Activated B cell treated with CpG ODN at 0.5 μM for 24 hours (primary cell): ENCODE measurements at regions of chr3 and their contacts with region 1.

Region 1: GRCh38 chr3:156674046-156674910 is at the start of gene TIPARP:
- DNase-seq: peak; percentile 100
- ATAC-seq: peak; percentile 80
- H3K4me3 Mint-ChIP-seq: peak within 1 kb of the TSS; percentile 92
- H3K27ac Mint-ChIP-seq: peak within 1 kb of the TSS; percentile 97
- H3K4me1 Mint-ChIP-seq: peaks cover 42% of the 10 kb centered on the region
- H3K27me3 Mint-ChIP-seq: no peaks in the 10 kb centered on the region
- CTCF ChIP-seq: no peak
- total RNA-seq, gene TIPARP: 31.3 and 32.3 TPM in 2 replicates

Region 2: GRCh38 chr3:156151824-156152428 is 522.4 kb before region 1 on chr3:
- CTCF ChIA-PET with region 1: no interaction called
- POLR2A ChIA-PET with region 1: no interaction called
- intact Hi-C with region 1: loop called (anchors 1 kb)
- DNase-seq: no peak
- ATAC-seq: peak; percentile 37
- H3K4me3 Mint-ChIP-seq: no peak overlapping the region
- H3K27ac Mint-ChIP-seq: no peak overlapping the region
- H3K4me1 Mint-ChIP-seq: peaks cover 6% of the 10 kb centered on the region
- H3K27me3 Mint-ChIP-seq: no peaks in the 10 kb centered on the region
- CTCF ChIP-seq: no peak

Region 3: DNA sequence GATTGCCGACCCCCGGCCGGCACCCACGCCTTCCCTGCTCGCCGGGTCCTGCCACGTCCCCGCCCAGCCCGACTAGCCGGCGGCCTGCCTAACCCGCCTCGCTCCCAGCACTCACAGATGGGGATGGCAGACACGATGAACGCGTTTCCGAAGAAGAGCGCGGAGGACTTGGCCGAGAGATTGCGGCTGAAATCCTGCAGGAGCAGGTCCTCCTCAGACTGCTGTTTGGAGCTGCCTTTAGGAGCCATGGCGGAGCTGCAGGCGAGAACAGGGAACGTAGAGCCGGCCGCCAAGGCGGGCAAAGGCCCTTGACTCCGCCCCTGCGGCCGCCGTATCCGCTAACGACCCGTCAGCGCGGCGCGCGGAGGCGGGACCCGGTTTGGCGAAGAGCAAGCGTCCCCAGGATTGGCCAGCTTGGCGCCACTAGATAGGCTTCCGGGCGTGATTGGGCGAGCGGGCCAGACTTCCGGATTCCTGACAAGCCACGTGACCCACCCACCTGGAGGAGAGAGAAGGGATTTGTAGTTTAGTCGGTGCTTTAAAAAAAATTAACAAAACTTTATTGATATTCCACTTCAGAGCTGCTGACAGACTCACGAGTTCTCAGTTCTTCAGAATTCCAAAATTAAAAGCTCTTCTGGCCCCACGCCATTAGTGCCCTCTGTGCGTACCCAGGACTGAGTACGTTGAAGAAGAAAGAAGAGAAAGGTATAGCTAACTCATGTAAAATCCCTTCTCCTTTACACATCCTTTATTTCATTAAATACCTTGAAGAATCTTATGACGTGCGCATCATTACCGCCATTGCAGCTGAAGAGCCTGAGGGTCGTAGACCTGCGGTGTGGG is 119.2 kb before region 1 on chr3 and contains the start of gene SSR3:
- CTCF ChIA-PET with region 1: interaction called, 27 read pairs
- POLR2A ChIA-PET with region 1: interaction called, 44 read pairs
- intact Hi-C with region 1: loop called (anchors 1 kb)
- DNase-seq: peak; percentile 94
- ATAC-seq: peak; percentile 99
- H3K4me3 Mint-ChIP-seq: peak within 1 kb of the TSS; percentile 98
- H3K27ac Mint-ChIP-seq: peak within 1 kb of the TSS; percentile 91
- H3K4me1 Mint-ChIP-seq: peaks cover 37% of the 10 kb centered on the region
- H3K27me3 Mint-ChIP-seq: no peaks in the 10 kb centered on the region
- CTCF ChIP-seq: no peak
- total RNA-seq, gene SSR3: 64.3 and 69.2 TPM in 2 replicates

Region 4: GRCh38 chr3:156605686-156606605 is 68.3 kb before region 1 on chr3:
- CTCF ChIA-PET with region 1: no interaction called
- POLR2A ChIA-PET with region 1: no interaction called
- intact Hi-C with region 1: no loop called
- DNase-seq: no peak
- ATAC-seq: no peak
- H3K4me3 Mint-ChIP-seq: peak overlapping the region; percentile 83
- H3K27ac Mint-ChIP-seq: no peak overlapping the region
- H3K4me1 Mint-ChIP-seq: peaks cover 12% of the 10 kb centered on the region
- H3K27me3 Mint-ChIP-seq: peaks cover 8% of the 10 kb centered on the region
- CTCF ChIP-seq: no peak

Region 5: GRCh38 chr3:156816800-156817645 is 142.7 kb after region 1 on chr3:
- CTCF ChIA-PET with region 1: interaction called, 3 read pairs
- POLR2A ChIA-PET with region 1: interaction called, 58 read pairs
- intact Hi-C with region 1: loop called (anchors 1 kb)
- DNase-seq: peak; percentile 93
- ATAC-seq: peak; percentile 83
- H3K4me3 Mint-ChIP-seq: peak overlapping the region; percentile 94
- H3K27ac Mint-ChIP-seq: peak overlapping the region; percentile 99
- H3K4me1 Mint-ChIP-seq: peaks cover 42% of the 10 kb centered on the region
- H3K27me3 Mint-ChIP-seq: no peaks in the 10 kb centered on the region
- CTCF ChIP-seq: no peak

Region 6: GRCh38 chr3:156964577-156964976 is 290.3 kb after region 1 on chr3:
- CTCF ChIA-PET with region 1: no interaction called
- POLR2A ChIA-PET with region 1: no interaction called
- intact Hi-C with region 1: no loop called
- DNase-seq: no peak
- ATAC-seq: no peak
- H3K4me3 Mint-ChIP-seq: no peak overlapping the region
- H3K27ac Mint-ChIP-seq: no peak overlapping the region
- H3K4me1 Mint-ChIP-seq: no peaks in the 10 kb centered on the region
- H3K27me3 Mint-ChIP-seq: no peaks in the 10 kb centered on the region
- CTCF ChIP-seq: no peak

Region 7: DNA sequence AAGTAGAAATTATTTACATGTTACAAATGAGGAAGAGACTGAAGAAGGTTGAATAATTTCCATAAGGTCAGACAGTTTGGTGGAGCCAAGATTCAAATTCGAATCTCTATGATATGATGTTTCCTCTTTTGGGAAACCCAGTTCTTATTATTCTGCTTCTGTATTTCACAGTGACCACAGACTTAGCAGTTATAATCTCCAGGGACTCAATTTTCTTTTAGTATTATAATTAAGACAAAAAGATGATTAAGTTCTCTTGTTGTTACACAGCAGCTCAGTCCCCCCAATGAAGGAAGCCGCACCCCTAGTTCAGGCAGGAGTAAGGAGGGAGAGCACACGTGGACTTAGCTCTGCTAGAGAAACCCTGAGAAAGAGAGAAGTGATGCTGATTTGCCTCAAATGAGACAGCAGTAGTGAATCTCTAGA is 355.1 kb after region 1 on chr3:
- CTCF ChIA-PET with region 1: interaction called, 3 read pairs
- POLR2A ChIA-PET with region 1: interaction called, 3 read pairs
- intact Hi-C with region 1: loop called (anchors 1 kb)
- DNase-seq: peak; percentile 19
- ATAC-seq: peak; percentile 92
- H3K4me3 Mint-ChIP-seq: peak overlapping the region; percentile 15
- H3K27ac Mint-ChIP-seq: peak overlapping the region; percentile 77
- H3K4me1 Mint-ChIP-seq: peaks cover 30% of the 10 kb centered on the region
- H3K27me3 Mint-ChIP-seq: peaks cover 2% of the 10 kb centered on the region
- CTCF ChIP-seq: no peak

Region 8: GRCh38 chr3:157136647-157137387 is 462.5 kb after region 1 on chr3:
- CTCF ChIA-PET with region 1: interaction called, 17 read pairs
- POLR2A ChIA-PET with region 1: interaction called, 11 read pairs
- intact Hi-C with region 1: loop called (anchors 1 kb)
- DNase-seq: no peak
- ATAC-seq: no peak
- H3K4me3 Mint-ChIP-seq: no peak overlapping the region
- H3K27ac Mint-ChIP-seq: no peak overlapping the region
- H3K4me1 Mint-ChIP-seq: peaks cover 5% of the 10 kb centered on the region
- H3K27me3 Mint-ChIP-seq: no peaks in the 10 kb centered on the region
- CTCF ChIP-seq: no peak